Colonic mucosa (tissue), 4 donors: ENCODE measurements at regions of chr4 and their contacts with region 1.

Region 1: DNA sequence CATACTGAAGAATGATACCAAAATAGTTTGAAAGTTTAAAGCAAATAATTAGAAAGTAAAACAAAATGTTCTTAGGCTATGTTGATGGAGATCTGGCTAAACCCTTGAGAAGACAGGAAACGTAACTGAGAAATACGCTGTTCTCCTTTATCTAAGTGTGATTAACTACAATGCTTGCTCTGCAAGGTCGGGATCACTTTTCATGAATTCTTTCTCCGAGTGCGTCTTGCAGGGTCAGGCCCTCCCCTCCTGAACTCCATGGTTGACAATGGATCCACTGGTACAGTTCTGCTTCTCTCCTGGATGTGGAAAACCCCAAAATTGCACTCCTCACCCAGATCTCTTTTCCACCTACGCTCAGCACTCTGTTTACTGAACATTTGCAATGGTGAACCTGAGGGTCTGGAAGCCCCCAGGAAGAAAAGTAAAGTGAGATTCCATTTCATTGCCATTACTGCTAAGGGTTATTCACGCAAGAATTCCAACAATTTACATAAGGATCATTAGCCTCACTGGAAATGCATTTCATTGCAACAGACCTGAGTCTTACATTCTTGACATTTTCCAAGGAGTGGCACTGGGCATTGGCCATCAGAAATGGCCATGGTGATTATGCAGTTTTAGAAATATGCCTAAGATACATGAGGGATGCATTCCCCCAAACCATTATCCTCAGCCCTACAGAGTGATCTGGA is 24.6 kb upstream of the WWC2 start:
- DNase-seq: no peak
- H3K4me3 ChIP-seq: no peak overlapping the region
- H3K27ac ChIP-seq: no peak overlapping the region
- H3K4me1 ChIP-seq: no peaks in the 10 kb centered on the region
- H3K27me3 ChIP-seq: no peaks in the 10 kb centered on the region
- CTCF ChIP-seq: no peak

Region 2: DNA sequence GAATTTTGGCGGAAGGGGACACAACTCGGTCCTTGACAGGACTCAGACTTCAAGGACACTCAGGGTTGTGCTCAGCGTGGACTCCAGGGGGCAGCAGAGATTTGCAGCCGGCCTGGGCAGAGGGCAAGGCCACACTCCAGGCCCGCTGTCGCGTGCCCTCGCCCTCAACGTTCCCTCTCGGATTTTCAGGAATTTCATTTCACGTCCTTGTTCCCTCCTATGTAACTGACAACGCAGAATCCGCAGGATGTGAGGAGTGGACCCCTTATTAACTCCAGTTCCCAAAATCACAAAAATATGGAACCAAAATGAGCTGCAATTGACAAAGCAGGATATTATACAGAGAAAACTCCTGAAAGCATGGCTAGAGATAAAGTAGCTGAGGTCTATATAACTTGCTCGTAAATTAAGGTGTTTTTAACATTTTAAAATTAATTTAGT is 136.2 kb before region 1 on chr4:
- intact Hi-C with region 1: loop called (anchors 2 kb)
- DNase-seq: peak; percentile 82
- H3K4me3 ChIP-seq: no peak overlapping the region
- H3K27ac ChIP-seq: no peak overlapping the region
- H3K4me1 ChIP-seq: no peaks in the 10 kb centered on the region
- H3K27me3 ChIP-seq: no peaks in the 10 kb centered on the region
- CTCF ChIP-seq: peak; percentile 85

Region 3: GRCh38 chr4:183017962-183018361 is 56.5 kb before region 1 on chr4:
- intact Hi-C with region 1: no loop called
- DNase-seq: no peak
- H3K4me3 ChIP-seq: no peak overlapping the region
- H3K27ac ChIP-seq: no peak overlapping the region
- H3K4me1 ChIP-seq: no peaks in the 10 kb centered on the region
- H3K27me3 ChIP-seq: no peaks in the 10 kb centered on the region
- CTCF ChIP-seq: no peak

Region 4: DNA sequence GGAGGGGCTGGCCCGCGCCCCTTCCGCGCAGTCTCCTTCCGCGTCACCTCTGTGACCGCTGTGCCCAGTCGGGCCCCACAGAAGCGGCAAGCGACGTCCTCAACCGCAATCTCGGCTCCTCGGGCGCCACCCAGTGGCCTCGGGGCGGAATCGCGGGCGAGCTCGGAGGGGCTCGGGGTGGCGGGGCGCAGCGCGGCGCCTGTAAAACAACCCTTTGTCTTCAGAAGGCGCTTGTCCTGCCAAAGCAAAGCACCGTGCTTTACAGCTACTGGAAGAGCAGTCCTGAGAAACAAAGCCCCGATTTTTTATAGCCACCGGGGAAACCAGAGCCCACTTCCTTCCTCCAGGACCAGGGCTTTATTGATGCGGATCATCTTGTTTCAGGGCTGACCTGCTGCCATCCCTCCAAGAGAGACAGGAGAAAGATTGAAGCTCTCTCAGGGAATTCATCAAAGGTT is 332.7 kb after region 1 on chr4:
- intact Hi-C with region 1: loop called (anchors 10 kb)
- DNase-seq: peak; percentile 91
- H3K4me3 ChIP-seq: peak overlapping the region; percentile 45
- H3K27ac ChIP-seq: peak overlapping the region; percentile 65
- H3K4me1 ChIP-seq: no peaks in the 10 kb centered on the region
- H3K27me3 ChIP-seq: no peaks in the 10 kb centered on the region
- CTCF ChIP-seq: peak; percentile 99